Activated CD4-positive, alpha-beta T cell treated with anti-CD3 and anti-CD28 coated beads for 36 hours (primary cell): ENCODE measurements at regions of chr17 and their contacts with region 1.

Region 1: GRCh38 chr17:56762988-56763387 is 70.7 kb downstream of the C17orf67 start:
- DNase-seq: no peak
- ATAC-seq: peak; percentile 97
- H3K4me3 Mint-ChIP-seq: peak overlapping the region; percentile 20
- H3K27ac Mint-ChIP-seq: peak overlapping the region; percentile 82
- H3K4me1 Mint-ChIP-seq: peaks cover 22% of the 10 kb centered on the region
- H3K27me3 Mint-ChIP-seq: no peaks in the 10 kb centered on the region

Region 2: DNA sequence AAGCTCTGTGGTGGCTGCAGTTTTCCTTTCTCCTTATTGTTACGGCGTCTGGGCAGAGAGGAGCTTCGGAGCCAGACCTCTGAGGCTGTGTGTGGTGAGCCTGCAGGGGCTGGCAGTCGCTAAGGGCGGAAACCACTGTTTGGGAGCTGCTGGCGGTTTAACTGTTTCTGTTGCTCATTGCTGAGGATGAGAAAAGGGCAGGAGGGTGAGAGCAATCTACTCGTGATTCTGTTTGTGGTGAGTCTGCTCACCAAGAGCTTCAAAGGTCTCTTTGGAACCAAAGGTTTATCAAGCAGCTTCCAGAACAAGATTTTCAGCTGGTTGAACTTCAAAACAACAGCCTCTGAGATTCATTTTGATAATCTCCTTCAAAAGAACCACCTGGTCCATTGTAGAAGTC is 465.8 kb before region 1 on chr17:
- CTCF ChIA-PET with region 1: no interaction called
- POLR2A ChIA-PET with region 1: no interaction called
- intact Hi-C with region 1: loop called in 1 of 2 experiments (anchors 10 kb)
- DNase-seq: peak; percentile 55
- ATAC-seq: peak; percentile 76
- H3K4me3 Mint-ChIP-seq: no peak overlapping the region
- H3K27ac Mint-ChIP-seq: peak overlapping the region; percentile 9
- H3K4me1 Mint-ChIP-seq: peaks cover 24% of the 10 kb centered on the region
- H3K27me3 Mint-ChIP-seq: no peaks in the 10 kb centered on the region

Region 3: GRCh38 chr17:56451629-56452028 is 311.4 kb before region 1 on chr17:
- CTCF ChIA-PET with region 1: no interaction called
- POLR2A ChIA-PET with region 1: no interaction called
- intact Hi-C with region 1: no loop called
- DNase-seq: no peak
- ATAC-seq: no peak
- H3K4me3 Mint-ChIP-seq: no peak overlapping the region
- H3K27ac Mint-ChIP-seq: no peak overlapping the region
- H3K4me1 Mint-ChIP-seq: no peaks in the 10 kb centered on the region
- H3K27me3 Mint-ChIP-seq: peaks cover 7% of the 10 kb centered on the region

Region 4: GRCh38 chr17:56699186-56699895 is 63.6 kb before region 1 on chr17:
- CTCF ChIA-PET with region 1: no interaction called
- POLR2A ChIA-PET with region 1: no interaction called
- intact Hi-C with region 1: no loop called
- DNase-seq: no peak
- ATAC-seq: no peak
- H3K4me3 Mint-ChIP-seq: no peak overlapping the region
- H3K27ac Mint-ChIP-seq: no peak overlapping the region
- H3K4me1 Mint-ChIP-seq: peaks cover 1% of the 10 kb centered on the region
- H3K27me3 Mint-ChIP-seq: peaks cover 5% of the 10 kb centered on the region

Region 5: DNA sequence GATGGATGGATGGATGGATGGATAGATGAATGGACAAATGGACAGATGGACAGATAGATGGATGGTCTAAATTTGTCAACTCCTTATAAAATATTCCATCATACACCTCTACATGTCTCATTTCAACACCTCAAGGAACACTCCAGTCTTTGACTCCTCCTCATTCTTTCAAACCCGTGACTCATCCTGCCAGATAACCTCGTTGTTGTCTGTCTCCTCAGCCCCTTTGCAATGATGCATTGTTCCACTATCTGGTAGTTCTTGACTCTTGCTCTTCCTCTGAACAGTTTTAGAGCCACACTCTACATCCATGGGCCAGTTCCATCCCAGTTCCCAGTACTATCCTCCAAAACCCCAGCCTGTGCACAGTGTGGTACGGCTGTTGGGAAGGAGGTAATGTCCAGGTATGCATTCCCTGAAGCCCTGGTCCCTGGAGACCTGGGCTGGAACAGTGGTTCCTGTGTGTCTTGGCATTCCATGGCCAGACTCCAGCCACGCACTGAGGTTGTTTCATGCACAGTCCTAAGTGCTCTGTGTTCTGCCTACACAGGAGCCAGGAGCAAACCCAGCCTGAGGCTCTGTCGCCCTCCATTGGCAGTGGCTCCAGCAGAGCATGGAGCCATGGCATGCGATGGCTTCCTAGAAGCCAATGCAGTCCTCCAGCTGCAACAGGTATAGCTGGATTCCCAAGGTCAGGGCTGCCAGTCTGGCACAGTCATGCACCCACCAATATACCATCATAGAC is 34.9 kb before region 1 on chr17:
- CTCF ChIA-PET with region 1: no interaction called
- POLR2A ChIA-PET with region 1: no interaction called
- intact Hi-C with region 1: no loop called
- DNase-seq: peak; percentile 18
- ATAC-seq: peak; percentile 74
- H3K4me3 Mint-ChIP-seq: no peak overlapping the region
- H3K27ac Mint-ChIP-seq: no peak overlapping the region
- H3K4me1 Mint-ChIP-seq: no peaks in the 10 kb centered on the region
- H3K27me3 Mint-ChIP-seq: peaks cover 2% of the 10 kb centered on the region